Activated CD4-positive, alpha-beta memory T cell treated with anti-CD3 and anti-CD28 coated beads, Interleukin-2, amount 10 ng/mL, durations not matched to agents 7 days and 5 days (primary cell): ENCODE measurements at regions of chr12 and their contacts with region 1.

Region 1: DNA sequence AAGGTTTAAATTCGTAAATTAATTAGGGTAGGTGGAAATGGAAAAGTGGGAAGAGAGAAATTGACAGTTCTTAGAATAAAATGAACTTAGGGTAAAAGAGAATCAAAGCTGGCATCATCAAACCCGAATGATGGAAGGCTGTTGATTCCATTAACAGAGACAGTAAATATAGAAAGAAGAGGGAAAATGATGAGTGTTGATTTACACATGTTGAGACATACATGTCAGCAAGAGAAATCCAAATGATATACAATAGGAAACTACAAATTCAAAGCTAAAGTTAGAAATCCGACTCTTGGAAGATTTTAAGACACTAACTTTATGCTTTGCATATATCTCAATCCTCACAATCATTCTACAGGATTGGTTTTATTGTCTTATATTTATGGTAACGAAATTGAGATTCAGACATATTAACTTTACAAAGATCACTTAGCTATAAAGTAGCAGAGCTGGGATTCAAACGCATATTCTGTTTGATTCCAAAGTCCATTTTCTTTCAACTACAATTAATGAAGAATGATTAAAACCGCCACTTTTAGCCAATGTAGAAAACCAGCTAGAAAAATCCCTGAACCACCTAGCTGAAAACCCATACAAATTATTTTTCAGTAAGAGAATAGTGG is 30.2 kb downstream of the LIMA1 start:
- DNase-seq: no peak
- H3K4me3 Mint-ChIP-seq: no peak overlapping the region
- H3K27ac Mint-ChIP-seq: no peak overlapping the region
- H3K4me1 Mint-ChIP-seq: peaks cover 62% of the 10 kb centered on the region
- H3K27me3 Mint-ChIP-seq: no peaks in the 10 kb centered on the region

Region 2: DNA sequence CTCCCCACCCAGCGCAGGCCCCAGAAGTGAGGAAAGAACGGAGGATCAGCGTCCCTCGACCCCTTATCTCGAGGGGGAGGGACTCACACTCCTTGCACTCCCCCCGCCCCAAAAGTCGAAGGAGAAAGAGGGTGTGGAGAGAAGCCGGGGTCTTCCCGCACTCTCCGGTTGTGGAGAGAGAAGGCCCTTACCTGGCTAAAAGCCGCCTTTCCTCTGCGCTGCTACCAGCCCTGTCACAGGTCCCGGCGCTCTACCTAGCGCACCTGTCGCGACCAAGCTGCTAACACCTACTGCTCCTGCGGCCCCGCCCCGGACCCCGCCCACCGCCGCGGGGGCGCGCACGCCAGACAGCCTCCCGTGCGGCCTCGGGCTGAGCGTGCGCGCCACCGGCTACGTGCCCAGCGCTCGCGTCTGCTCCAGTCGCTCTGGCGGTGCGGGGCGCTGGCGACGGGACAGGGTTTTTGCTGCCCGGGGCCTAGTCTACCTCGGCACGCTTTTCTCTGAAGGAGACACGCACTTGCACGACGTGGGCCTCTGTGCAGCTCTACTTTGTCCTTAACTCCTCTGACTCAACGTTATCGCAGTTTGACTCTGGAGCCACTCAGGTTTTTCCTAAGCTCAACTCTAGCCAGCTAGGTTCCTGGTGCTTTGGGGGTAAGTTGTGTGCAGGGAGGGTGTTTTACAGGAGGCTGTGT is 30.3 kb after region 1 on chr12 and contains the start of gene LIMA1:
- CTCF ChIA-PET with region 1: interaction called, 5 read pairs
- POLR2A ChIA-PET with region 1: interaction called, 18 read pairs
- DNase-seq: peak; percentile 93
- H3K4me3 Mint-ChIP-seq: peak within 1 kb of the TSS; percentile 89
- H3K27ac Mint-ChIP-seq: peak within 1 kb of the TSS; percentile 70
- H3K4me1 Mint-ChIP-seq: peaks cover 26% of the 10 kb centered on the region
- H3K27me3 Mint-ChIP-seq: peaks cover 13% of the 10 kb centered on the region
- total RNA-seq, gene LIMA1: 59.4 to 59.9 TPM

Region 3: GRCh38 chr12:50786498-50787231 is 533.6 kb after region 1 on chr12:
- CTCF ChIA-PET with region 1: no interaction called
- POLR2A ChIA-PET with region 1: no interaction called
- DNase-seq: no peak
- H3K4me3 Mint-ChIP-seq: no peak overlapping the region
- H3K27ac Mint-ChIP-seq: no peak overlapping the region
- H3K4me1 Mint-ChIP-seq: peaks cover 29% of the 10 kb centered on the region
- H3K27me3 Mint-ChIP-seq: no peaks in the 10 kb centered on the region